CD4-positive, alpha-beta memory T cell (primary cell): ENCODE measurements at regions of chr16 and their contacts with region 1.

Region 1: DNA sequence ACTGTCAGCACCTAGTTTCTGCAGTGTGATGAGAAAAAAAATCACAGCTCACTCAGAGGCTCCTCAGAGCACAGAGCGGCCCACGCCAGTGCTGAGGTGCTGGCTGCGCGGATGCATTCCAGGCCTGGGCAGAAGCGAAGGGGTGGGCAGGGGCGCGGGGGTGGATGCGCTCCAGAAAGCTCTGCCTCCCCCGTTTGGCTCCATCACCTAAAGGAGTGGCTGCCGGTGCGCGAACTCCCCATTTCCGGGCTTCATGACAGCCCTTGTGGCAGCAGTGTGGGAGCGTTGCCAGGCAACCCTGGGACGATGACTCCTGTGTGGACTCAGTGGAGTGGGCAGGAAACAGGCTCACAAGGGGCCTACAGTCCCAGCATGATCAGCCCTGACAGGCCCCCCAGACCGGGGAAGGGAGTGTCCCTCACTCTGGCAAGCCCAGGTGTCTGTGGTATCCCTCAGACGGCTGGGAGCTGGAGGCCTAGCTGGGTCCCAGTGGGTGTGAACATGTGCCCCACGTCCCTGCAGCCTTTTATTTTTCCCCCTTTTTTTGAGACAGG is 32.8 kb upstream of the NUDT16L1 start:
- DNase-seq: peak; percentile 42 to 79 (median 63)
- H3K4me3 ChIP-seq: no peak overlapping the region
- H3K4me3 Mint-ChIP-seq: peak overlapping the region in 5 of 8 donors; percentile 36 to 69 (median 43)
- H3K27ac ChIP-seq: peak overlapping the region; percentile 49
- H3K27ac Mint-ChIP-seq: peak overlapping the region; percentile 81 to 94 (median 90)
- H3K4me1 ChIP-seq: peaks cover 48% of the 10 kb centered on the region
- H3K4me1 Mint-ChIP-seq: peaks cover 16 to 63% (median 35%) of the 10 kb centered on the region in 4 donors
- H3K27me3 ChIP-seq: no peaks in the 10 kb centered on the region
- H3K27me3 Mint-ChIP-seq: no peaks in the 10 kb centered on the region

Region 2: GRCh38 chr16:4640572-4641305 is 19.8 kb before region 1 on chr16:
- CTCF ChIA-PET with region 1: no interaction called
- POLR2A ChIA-PET with region 1: no interaction called
- intact Hi-C with region 1: no loop called
- DNase-seq: no peak
- H3K4me3 ChIP-seq: no peak overlapping the region
- H3K4me3 Mint-ChIP-seq: no peak overlapping the region
- H3K27ac ChIP-seq: no peak overlapping the region
- H3K27ac Mint-ChIP-seq: peak overlapping the region in 5 of 7 donors; percentile 6 to 60 (median 51)
- H3K4me1 ChIP-seq: peaks cover 11% of the 10 kb centered on the region
- H3K4me1 Mint-ChIP-seq: peaks cover 11 to 39% (median 21%) of the 10 kb centered on the region in 4 donors
- H3K27me3 ChIP-seq: no peaks in the 10 kb centered on the region
- H3K27me3 Mint-ChIP-seq: no peaks in the 10 kb centered on the region

Region 3: GRCh38 chr16:4675864-4676786 is 15.6 kb after region 1 on chr16:
- CTCF ChIA-PET with region 1: interaction called, 3 read pairs
- POLR2A ChIA-PET with region 1: interaction called, 4 read pairs
- intact Hi-C with region 1: loop called (anchors 1 kb)
- DNase-seq: peak; percentile 72 to 83 (median 80)
- H3K4me3 ChIP-seq: no peak overlapping the region
- H3K4me3 Mint-ChIP-seq: peak overlapping the region; percentile 54 to 87 (median 76)
- H3K27ac ChIP-seq: peak overlapping the region; percentile 65
- H3K27ac Mint-ChIP-seq: peak overlapping the region; percentile 95 to 99 (median 98)
- H3K4me1 ChIP-seq: peaks cover 23% of the 10 kb centered on the region
- H3K4me1 Mint-ChIP-seq: peaks cover 15 to 29% (median 23%) of the 10 kb centered on the region in 4 donors
- H3K27me3 ChIP-seq: no peaks in the 10 kb centered on the region
- H3K27me3 Mint-ChIP-seq: no peaks in the 10 kb centered on the region